ENCODE measurements at regions of chr12 and their contacts with region 1.

Region 1: GRCh38 chr12:123131291-123131832 is 19.5 kb downstream of the PITPNM2 start:
- DNase-seq: no peak
- ATAC-seq: peak in 3 of 4 experiments; percentile 6 to 37 (median 10)
- H3K4me3 ChIP-seq: no peak overlapping the region
- H3K4me3 Mint-ChIP-seq: peak overlapping the region; percentile 51 to 57 (median 57)
- H3K27ac ChIP-seq: peak overlapping the region; percentile 56
- H3K27ac Mint-ChIP-seq: peak overlapping the region; percentile 92 to 94
- H3K4me1 ChIP-seq: peaks cover 10 to 31% of the 10 kb centered on the region in 2 experiments
- H3K4me1 Mint-ChIP-seq: peaks cover 37 to 57% (median 50%) of the 10 kb centered on the region in 3 donors
- H3K27me3 ChIP-seq: no peaks in the 10 kb centered on the region
- H3K27me3 Mint-ChIP-seq: no peaks in the 10 kb centered on the region

Region 2: GRCh38 chr12:123153906-123154305 is 22.5 kb after region 1 on chr12:
- CTCF ChIA-PET with region 1: interaction called in 1 of 2 experiments, 3 read pairs
- POLR2A ChIA-PET with region 1: interaction called in 1 of 2 experiments, 14 read pairs
- DNase-seq: no peak
- ATAC-seq: no peak
- H3K4me3 ChIP-seq: no peak overlapping the region
- H3K4me3 Mint-ChIP-seq: no peak overlapping the region
- H3K27ac ChIP-seq: no peak overlapping the region
- H3K27ac Mint-ChIP-seq: peak overlapping the region in 1 of 2 donors; percentile 11
- H3K4me1 ChIP-seq: peaks cover 6 to 27% of the 10 kb centered on the region in 2 experiments
- H3K4me1 Mint-ChIP-seq: peaks cover 12 to 28% (median 23%) of the 10 kb centered on the region in 3 donors
- H3K27me3 ChIP-seq: peaks cover 0 to 11% of the 10 kb centered on the region in 2 experiments
- H3K27me3 Mint-ChIP-seq: no peaks in the 10 kb centered on the region

Measured in T-cell (primary cell).